Heart right ventricle (tissue), 16 donors: ENCODE measurements at regions of chr7 and their contacts with region 1.

Region 1: GRCh38 chr7:85882335-85882734 is 695.5 kb upstream of the SEMA3D start:
- DNase-seq: no peak
- ATAC-seq: no peak
- H3K4me3 ChIP-seq: no peak overlapping the region
- H3K27ac ChIP-seq: no peak overlapping the region
- H3K4me1 ChIP-seq: no peaks in the 10 kb centered on the region
- H3K27me3 ChIP-seq: no peaks in the 10 kb centered on the region
- CTCF ChIP-seq: no peak

Region 2: GRCh38 chr7:85160223-85160622 is 722.1 kb before region 1 on chr7:
- intact Hi-C with region 1: no loop called
- DNase-seq: no peak
- ATAC-seq: no peak
- H3K4me3 ChIP-seq: no peak overlapping the region
- H3K27ac ChIP-seq: no peak overlapping the region
- H3K4me1 ChIP-seq: no peaks in the 10 kb centered on the region
- H3K27me3 ChIP-seq: no peaks in the 10 kb centered on the region
- CTCF ChIP-seq: no peak

Region 3: GRCh38 chr7:85833066-85833465 is 49.3 kb before region 1 on chr7:
- intact Hi-C with region 1: no loop called
- DNase-seq: no peak
- ATAC-seq: no peak
- H3K4me3 ChIP-seq: no peak overlapping the region
- H3K27ac ChIP-seq: no peak overlapping the region
- H3K4me1 ChIP-seq: no peaks in the 10 kb centered on the region
- H3K27me3 ChIP-seq: no peaks in the 10 kb centered on the region
- CTCF ChIP-seq: no peak

Region 4: DNA sequence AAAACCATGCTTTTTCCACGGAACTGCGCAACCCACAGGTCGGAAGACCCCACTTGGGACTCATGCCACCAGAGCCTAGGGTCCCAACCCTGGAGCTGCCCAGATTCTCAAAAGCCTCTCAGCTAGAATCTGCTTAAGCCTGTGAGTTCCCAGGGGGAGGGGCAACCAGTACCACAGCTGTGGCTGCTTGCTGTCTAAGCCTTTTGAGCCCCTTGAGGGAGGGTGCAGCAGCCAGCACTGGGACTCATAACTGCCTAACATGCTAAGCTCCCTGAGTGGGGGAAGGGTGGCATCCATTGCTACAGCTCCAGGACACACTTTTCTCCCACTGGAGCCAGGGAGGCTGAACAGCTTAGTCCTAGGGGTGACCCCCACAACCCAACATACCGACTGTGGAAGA is 275.8 kb after region 1 on chr7:
- intact Hi-C with region 1: no loop called
- DNase-seq: no peak
- ATAC-seq: no peak
- H3K4me3 ChIP-seq: no peak overlapping the region
- H3K27ac ChIP-seq: no peak overlapping the region
- H3K4me1 ChIP-seq: no peaks in the 10 kb centered on the region
- H3K27me3 ChIP-seq: no peaks in the 10 kb centered on the region
- CTCF ChIP-seq: no peak

Region 5: GRCh38 chr7:86469680-86470295 is 587.5 kb after region 1 on chr7:
- intact Hi-C with region 1: loop called in 2 of 10 experiments (anchors 5 to 10 kb)
- DNase-seq: peak in 1 of 2 donors; percentile 13
- ATAC-seq: no peak
- H3K4me3 ChIP-seq: no peak overlapping the region
- H3K27ac ChIP-seq: no peak overlapping the region
- H3K4me1 ChIP-seq: no peaks in the 10 kb centered on the region
- H3K27me3 ChIP-seq: peaks cover 0 to 3% (median 0%) of the 10 kb centered on the region in 7 donors
- CTCF ChIP-seq: peak in 8 of 9 donors; percentile 15 to 64 (median 56)

Region 6: GRCh38 chr7:86904949-86905834 is 1022.9 kb after region 1 on chr7:
- intact Hi-C with region 1: loop called in 5 of 10 experiments (anchors 10 kb)
- DNase-seq: no peak
- ATAC-seq: no peak
- H3K4me3 ChIP-seq: no peak overlapping the region
- H3K27ac ChIP-seq: no peak overlapping the region
- H3K4me1 ChIP-seq: no peaks in the 10 kb centered on the region
- H3K27me3 ChIP-seq: no peaks in the 10 kb centered on the region
- CTCF ChIP-seq: peak in 8 of 9 donors; percentile 17 to 62 (median 57)